Activated CD4-positive, alpha-beta memory T cell treated with anti-CD3 and anti-CD28 coated beads for 36 hours (primary cell): ENCODE measurements at regions of chr19 and their contacts with region 1.

Region 1: GRCh38 chr19:506404-507285 is 652 bp upstream of the TPGS1 start:
- DNase-seq: peak; percentile 95
- H3K4me3 Mint-ChIP-seq: peak overlapping the region; percentile 89
- H3K27ac Mint-ChIP-seq: peak overlapping the region; percentile 100
- H3K4me1 Mint-ChIP-seq: peaks cover 40% of the 10 kb centered on the region
- H3K27me3 Mint-ChIP-seq: no peaks in the 10 kb centered on the region

Region 2: DNA sequence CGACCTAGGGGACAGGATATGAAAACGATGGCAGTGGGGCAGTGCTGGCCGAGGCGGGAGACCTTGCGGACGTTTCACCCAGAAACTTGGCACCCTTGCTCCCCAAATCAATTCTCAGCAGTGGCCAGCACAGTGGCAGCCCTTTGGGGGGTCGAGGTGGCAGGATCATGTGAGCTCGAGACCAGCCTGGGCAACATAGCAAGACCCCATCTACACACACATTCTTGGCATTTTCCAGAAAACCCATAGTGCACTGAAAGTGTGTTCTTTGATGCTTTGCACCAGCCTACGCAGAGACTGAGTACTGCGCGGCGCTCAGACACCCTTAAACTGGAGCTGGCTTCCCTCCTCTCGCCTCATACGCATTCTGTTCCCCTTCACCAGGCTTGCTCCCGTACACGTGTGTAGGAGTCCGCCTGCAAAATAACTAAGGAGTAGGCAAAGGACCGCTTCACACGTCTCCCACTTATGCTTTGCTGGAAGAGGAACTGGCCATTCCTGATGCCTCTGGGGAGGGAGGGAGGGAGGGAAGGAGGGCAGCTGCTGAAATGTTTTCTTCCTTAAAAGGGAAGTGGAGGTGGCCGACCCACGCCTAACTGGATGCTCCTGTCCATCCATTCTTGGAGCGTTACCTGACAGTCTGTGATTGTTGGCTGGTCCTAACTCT is 138.5 kb before region 1 on chr19:
- CTCF ChIA-PET with region 1: no interaction called
- POLR2A ChIA-PET with region 1: no interaction called
- intact Hi-C with region 1: no loop called
- DNase-seq: no peak
- H3K4me3 Mint-ChIP-seq: no peak overlapping the region
- H3K27ac Mint-ChIP-seq: no peak overlapping the region
- H3K4me1 Mint-ChIP-seq: no peaks in the 10 kb centered on the region
- H3K27me3 Mint-ChIP-seq: peaks cover 22% of the 10 kb centered on the region

Region 3: GRCh38 chr19:383922-384798 is 122.5 kb before region 1 on chr19:
- CTCF ChIA-PET with region 1: interaction called, 6 read pairs
- POLR2A ChIA-PET with region 1: no interaction called
- intact Hi-C with region 1: loop called (anchors 2 kb)
- DNase-seq: peak; percentile 21
- H3K4me3 Mint-ChIP-seq: no peak overlapping the region
- H3K27ac Mint-ChIP-seq: no peak overlapping the region
- H3K4me1 Mint-ChIP-seq: peaks cover 24% of the 10 kb centered on the region
- H3K27me3 Mint-ChIP-seq: peaks cover 34% of the 10 kb centered on the region

Region 4: DNA sequence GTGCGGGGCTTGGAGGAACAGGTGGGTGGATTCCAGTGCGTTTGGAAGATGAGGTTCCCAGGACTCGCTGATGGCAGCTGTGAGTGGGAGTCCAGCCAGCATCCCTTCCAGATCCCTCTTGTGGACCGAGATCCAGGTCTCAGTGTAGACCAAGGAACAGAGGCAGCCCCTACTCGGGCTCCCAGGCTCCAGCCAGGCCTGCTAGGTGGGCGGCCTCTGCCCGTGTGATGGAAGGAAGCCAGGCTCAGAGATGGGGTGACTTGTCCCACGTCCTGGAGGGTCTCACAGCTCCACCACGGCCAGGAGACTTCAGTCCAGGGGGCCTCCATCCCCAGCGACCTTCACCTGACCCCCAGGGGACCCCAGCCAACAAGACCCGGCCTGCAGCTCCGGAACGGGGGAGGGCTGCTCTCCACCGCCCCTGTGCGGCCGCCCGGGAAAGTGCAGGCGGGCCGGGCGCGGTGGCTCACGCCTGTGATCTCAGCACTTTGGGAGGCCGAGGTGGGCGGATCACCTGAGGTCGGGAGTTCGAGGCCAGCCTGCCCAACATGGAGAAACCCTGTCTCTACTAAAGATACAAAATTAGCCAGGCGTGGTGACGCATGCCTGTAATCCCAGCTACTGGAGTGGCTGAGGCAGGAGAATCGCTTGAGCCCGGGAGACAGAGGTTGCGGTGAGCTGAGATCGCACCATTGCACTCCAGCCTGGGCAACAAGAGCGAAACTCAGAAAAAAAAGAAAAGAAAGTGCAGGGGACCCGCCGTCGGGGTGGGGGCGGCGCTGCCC is 11.1 kb before region 1 on chr19:
- CTCF ChIA-PET with region 1: interaction called, 26 read pairs
- POLR2A ChIA-PET with region 1: interaction called, 5 read pairs
- intact Hi-C with region 1: no loop called
- DNase-seq: peak; percentile 72
- H3K4me3 Mint-ChIP-seq: no peak overlapping the region
- H3K27ac Mint-ChIP-seq: no peak overlapping the region
- H3K4me1 Mint-ChIP-seq: peaks cover 2% of the 10 kb centered on the region
- H3K27me3 Mint-ChIP-seq: peaks cover 15% of the 10 kb centered on the region

Region 5: GRCh38 chr19:531009-531752 is 24.5 kb after region 1 on chr19:
- CTCF ChIA-PET with region 1: interaction called, 66 read pairs
- POLR2A ChIA-PET with region 1: interaction called, 13 read pairs
- intact Hi-C with region 1: loop called (anchors 1 kb)
- DNase-seq: peak; percentile 90
- H3K4me3 Mint-ChIP-seq: peak overlapping the region; percentile 81
- H3K27ac Mint-ChIP-seq: peak overlapping the region; percentile 80
- H3K4me1 Mint-ChIP-seq: peaks cover 12% of the 10 kb centered on the region
- H3K27me3 Mint-ChIP-seq: peaks cover 3% of the 10 kb centered on the region

Region 6: DNA sequence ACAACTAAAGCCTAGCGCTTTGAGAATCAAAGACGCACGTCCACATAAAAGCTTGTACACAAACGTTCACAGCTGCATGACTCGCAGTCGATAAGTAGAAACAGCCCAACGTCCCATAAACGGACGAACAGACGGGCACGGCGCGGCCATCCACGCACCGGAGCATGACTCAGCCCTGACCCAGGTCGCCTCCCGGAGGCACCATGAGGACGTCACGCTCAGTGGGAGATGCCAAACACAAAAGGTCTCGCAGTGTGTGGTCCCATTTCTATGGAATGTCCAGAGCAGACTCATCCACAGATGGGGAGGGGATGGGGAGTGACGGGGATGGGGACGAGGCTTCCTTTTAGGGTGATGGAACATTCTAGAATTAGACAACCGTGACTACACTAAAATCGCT is 117.3 kb after region 1 on chr19:
- CTCF ChIA-PET with region 1: no interaction called
- POLR2A ChIA-PET with region 1: no interaction called
- intact Hi-C with region 1: no loop called
- DNase-seq: no peak
- H3K4me3 Mint-ChIP-seq: no peak overlapping the region
- H3K27ac Mint-ChIP-seq: no peak overlapping the region
- H3K4me1 Mint-ChIP-seq: peaks cover 2% of the 10 kb centered on the region
- H3K27me3 Mint-ChIP-seq: no peaks in the 10 kb centered on the region